ENCODE measurements at regions of chr13 and their contacts with region 1.

Region 1: DNA sequence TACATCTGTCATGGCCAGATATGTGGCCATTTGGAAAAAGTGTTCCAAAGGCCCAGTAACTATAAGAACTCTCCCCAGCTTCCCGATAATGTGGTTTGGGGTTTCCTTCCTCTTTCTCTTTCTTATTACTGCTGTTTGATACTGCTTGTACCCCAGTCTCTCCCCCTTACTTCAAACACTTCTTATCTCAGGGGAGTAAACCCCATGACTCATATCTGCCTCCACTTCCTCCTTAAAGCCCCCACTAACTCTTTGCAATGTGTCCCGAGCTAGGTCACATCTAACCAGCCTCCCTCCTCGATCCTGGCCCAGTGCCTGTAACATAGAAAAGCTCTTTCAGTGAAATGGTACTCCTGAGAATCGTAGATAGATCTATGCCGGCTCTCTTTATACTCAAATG is 82.4 kb upstream of the STARD13 start:
- DNase-seq: no peak
- ATAC-seq: no peak
- H3K4me3 ChIP-seq: no peak overlapping the region
- H3K27ac ChIP-seq: no peak overlapping the region
- H3K4me1 ChIP-seq: no peaks in the 10 kb centered on the region
- H3K27me3 ChIP-seq: no peaks in the 10 kb centered on the region
- CTCF ChIP-seq: no peak

Region 2: GRCh38 chr13:33434676-33435075 is 66.8 kb after region 1 on chr13:
- CTCF ChIA-PET with region 1: no interaction called
- POLR2A ChIA-PET with region 1: interaction called, 12 read pairs
- in situ Hi-C with region 1: no loop called
- intact Hi-C with region 1: no loop called
- DNase-seq: no peak
- ATAC-seq: no peak
- H3K4me3 ChIP-seq: no peak overlapping the region
- H3K27ac ChIP-seq: no peak overlapping the region
- H3K4me1 ChIP-seq: no peaks in the 10 kb centered on the region
- H3K27me3 ChIP-seq: no peaks in the 10 kb centered on the region
- CTCF ChIP-seq: no peak